ENCODE measurements at regions of chr15 and their contacts with region 1.

Region 1: GRCh38 chr15:36951731-36952247 is 148.6 kb downstream of the MEIS2 start:
- DNase-seq: peak in 1 of 3 donors; percentile 27
- ATAC-seq: peak; percentile 43 to 64
- H3K4me3 ChIP-seq: no peak overlapping the region
- H3K27ac ChIP-seq: no peak overlapping the region
- H3K4me1 ChIP-seq: peaks cover 2% of the 10 kb centered on the region
- H3K27me3 ChIP-seq: no peaks in the 10 kb centered on the region

Region 2: DNA sequence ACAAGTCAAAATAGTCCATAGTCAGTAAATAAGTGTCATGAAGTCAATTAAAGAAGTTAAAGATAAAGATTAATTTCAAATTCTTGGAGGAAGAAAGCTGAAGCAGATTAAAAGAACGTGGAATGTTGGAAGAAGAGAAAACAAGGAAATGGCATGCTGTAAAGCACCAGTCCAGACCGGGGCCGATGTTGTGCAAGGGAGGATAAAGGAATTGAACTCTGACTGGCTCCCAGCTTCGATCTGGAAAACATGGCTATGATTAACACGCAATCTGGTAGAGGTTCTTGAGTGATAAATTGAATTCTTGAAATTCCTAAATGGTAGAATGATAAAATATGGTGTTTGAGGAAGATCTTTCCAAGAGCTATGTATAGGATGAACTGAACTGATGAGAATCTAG is 45.9 kb before region 1 on chr15:
- intact Hi-C with region 1: loop called in 1 of 4 experiments (anchors 10 kb)
- DNase-seq: peak in 2 of 3 donors; percentile 42 to 53
- ATAC-seq: peak; percentile 51 to 75
- H3K4me3 ChIP-seq: no peak overlapping the region
- H3K27ac ChIP-seq: no peak overlapping the region
- H3K4me1 ChIP-seq: peaks cover 10% of the 10 kb centered on the region
- H3K27me3 ChIP-seq: no peaks in the 10 kb centered on the region